Activated CD4-positive, alpha-beta T cell treated with anti-CD3 and anti-CD28 coated beads for 36 hours (primary cell): ENCODE measurements at regions of chr2 and their contacts with region 1.

Region 1: DNA sequence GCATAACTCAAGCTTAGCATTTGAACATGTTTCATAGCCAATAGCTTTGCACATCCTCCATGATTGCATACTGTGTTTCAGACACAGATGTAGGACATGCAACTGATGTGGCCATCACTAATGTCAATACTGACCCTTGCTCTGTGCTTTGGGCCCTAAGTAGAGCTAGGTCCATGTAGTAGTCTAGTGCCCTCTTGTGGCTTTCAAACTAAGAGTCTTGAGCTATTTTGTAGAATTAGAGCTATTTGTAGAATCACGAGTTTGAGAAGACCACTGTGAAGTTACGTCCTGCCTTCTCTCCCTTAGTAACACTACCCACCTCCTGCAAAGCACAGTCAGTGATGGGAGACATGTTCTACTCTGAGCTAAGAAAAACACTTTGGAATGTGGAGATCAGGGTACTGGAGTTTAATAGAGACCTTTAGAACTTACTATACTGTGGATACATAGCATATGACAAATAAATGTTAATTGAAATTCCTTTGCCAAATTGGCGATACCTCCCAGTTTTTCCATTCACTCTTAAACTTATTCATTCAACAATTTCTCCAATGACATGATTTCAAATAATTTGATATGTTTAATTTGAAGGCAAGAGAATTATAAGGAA is 306.5 kb upstream of the TNP1 start:
- DNase-seq: no peak
- ATAC-seq: no peak
- H3K4me3 Mint-ChIP-seq: no peak overlapping the region
- H3K27ac Mint-ChIP-seq: no peak overlapping the region
- H3K4me1 Mint-ChIP-seq: peaks cover 17% of the 10 kb centered on the region
- H3K27me3 Mint-ChIP-seq: peaks cover 14% of the 10 kb centered on the region

Region 2: DNA sequence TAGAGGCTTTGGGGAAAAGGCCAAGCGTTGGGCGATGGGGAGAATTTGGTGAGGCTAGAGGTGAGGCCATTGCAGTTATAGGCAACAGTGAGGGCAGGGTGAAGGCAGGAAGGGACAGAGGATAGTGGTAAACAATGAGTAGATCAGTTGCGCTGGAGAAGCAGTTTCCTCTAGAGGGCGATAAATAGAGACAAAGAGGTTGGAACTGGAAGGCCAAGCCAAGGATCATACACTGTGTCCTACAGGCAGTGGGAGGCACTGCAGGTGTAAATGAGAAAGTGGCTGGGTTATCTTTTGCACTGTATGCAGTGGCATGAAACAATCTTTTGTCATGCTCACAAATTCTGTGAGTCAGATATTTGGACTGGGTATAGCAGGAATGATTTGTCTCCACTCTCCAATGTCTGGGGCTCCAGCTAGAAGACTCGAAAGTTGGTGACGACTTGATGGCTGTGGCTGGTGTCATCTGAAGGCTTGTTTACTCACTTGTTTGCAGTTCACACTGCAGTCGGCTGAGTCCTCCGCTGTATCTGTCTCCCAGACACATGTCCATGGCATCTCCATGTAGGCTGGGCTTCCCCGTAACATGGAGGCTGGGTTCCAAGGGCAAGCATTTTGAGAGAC is 388.6 kb before region 1 on chr2:
- CTCF ChIA-PET with region 1: no interaction called
- POLR2A ChIA-PET with region 1: no interaction called
- intact Hi-C with region 1: loop called in 1 of 2 experiments (anchors 5 kb)
- DNase-seq: peak; percentile 64
- ATAC-seq: peak; percentile 97
- H3K4me3 Mint-ChIP-seq: no peak overlapping the region
- H3K27ac Mint-ChIP-seq: no peak overlapping the region
- H3K4me1 Mint-ChIP-seq: no peaks in the 10 kb centered on the region
- H3K27me3 Mint-ChIP-seq: peaks cover 6% of the 10 kb centered on the region

Region 3: DNA sequence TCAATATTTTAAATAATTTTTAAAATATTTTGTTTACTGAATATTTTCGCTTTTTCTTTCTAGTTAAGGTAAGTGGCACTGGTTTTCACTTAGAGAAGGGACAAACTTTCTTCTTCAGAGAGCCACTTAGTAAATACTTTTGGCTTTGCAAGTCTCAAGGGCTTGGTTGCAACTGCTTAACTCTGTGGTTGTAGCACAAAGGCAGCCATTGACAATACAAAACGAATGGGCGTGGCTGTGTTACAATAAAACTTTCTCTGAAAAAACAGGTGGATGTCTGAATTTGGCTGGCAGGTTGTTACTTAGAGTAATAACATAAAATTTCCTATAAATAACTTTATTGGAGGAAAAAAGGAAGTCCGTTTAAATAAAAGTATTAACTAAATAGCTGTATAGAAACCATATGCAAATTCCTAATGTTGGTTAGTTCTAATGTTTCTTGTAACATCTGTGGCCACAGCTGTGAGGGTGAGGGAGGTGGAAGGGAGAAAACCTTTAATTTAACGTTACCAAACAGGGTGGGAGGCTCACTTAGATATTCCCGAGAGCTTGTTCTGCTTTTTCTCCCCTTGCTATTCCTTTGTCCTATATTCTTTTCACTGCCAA is 244.1 kb before region 1 on chr2:
- CTCF ChIA-PET with region 1: no interaction called
- POLR2A ChIA-PET with region 1: no interaction called
- intact Hi-C with region 1: no loop called
- DNase-seq: no peak
- ATAC-seq: no peak
- H3K4me3 Mint-ChIP-seq: no peak overlapping the region
- H3K27ac Mint-ChIP-seq: no peak overlapping the region
- H3K4me1 Mint-ChIP-seq: no peaks in the 10 kb centered on the region
- H3K27me3 Mint-ChIP-seq: no peaks in the 10 kb centered on the region

Region 4: DNA sequence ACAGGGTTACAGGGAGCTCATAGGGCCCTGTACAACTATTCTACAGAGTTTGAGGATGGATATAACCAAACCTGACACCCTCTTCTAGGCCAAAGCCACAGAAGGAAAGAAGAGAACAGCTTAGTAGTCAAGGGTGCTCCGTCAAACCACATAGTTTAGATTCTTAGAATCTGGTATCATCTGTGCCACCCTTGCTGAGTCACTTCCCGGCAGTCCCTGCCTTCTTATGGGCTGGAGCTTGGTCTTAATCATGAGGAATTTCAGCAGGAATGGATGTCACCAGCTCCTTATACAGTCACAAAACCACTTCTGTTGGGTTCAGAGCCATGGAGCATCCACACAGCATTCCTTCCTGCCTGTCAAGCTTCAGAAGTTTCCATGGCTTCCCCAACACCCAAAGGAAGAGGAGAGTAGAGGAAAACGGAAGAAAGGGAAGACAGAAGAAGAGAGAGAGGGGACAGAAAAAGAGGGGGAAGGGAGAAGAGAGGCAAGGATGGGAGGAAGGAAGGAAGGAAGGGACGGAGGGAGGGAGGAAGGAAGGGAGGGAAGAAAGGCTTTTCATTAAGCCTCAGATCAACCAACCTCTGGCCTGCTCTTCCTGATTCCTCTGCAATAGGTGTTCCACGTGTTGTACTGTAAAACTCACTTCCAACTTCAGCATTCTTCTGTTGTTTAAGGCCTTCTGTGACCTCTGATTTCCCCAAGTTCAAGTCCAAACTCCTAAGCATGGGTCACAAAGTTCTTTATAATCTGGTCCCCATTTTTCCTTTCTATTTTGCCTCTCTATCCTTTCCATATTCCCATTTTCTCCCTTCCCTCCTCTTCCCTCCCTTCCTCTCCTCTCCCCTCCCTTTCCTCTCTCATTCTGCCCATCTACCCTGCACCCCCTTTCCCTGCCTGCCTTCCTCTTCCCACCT is 60.4 kb before region 1 on chr2:
- CTCF ChIA-PET with region 1: no interaction called
- POLR2A ChIA-PET with region 1: no interaction called
- intact Hi-C with region 1: no loop called
- DNase-seq: peak; percentile 39
- ATAC-seq: peak; percentile 86
- H3K4me3 Mint-ChIP-seq: no peak overlapping the region
- H3K27ac Mint-ChIP-seq: no peak overlapping the region
- H3K4me1 Mint-ChIP-seq: peaks cover 9% of the 10 kb centered on the region
- H3K27me3 Mint-ChIP-seq: peaks cover 7% of the 10 kb centered on the region

Region 5: DNA sequence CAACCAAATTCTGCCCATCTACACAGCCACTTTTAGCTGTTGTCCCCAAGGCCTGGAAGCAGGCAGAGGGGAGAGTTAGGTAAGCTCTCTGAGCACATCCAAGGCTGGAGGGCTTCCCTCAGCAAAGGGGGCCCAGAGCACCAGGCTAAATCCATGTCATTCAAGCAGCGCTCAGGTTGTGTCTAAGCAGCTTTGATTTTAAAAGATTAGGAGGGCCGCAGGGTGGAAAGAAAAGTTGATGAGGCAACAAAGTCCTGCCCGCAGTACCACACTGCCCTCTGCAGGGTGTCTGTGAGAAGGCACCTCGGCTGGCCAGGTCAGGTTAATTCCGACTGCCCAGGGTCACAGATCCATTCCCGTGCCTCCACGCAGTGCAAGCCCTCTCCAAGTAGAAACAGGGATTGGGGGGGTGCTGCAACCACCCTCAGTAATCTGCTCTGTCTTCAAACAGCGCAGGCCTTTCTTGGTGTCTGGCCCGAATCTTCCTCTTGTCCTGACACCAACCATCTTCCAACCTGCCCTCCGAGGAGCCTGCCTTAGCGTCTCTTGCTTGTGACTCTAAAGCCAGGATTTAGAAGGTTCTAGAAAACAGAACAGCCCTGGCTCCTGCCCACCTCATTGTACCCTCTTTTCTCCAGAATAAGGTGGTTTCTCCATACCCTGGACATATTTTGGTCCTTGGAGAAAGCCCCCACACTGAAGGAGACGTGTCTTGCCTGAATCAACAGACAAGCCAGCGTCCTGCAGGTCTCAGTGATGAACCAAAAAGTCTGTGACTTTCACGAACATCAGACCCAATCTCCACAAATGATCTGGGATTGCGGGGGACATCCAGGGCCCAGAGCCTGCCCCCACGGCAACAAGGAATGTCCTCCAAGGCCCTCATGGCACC is 547.3 kb after region 1 on chr2:
- CTCF ChIA-PET with region 1: no interaction called
- POLR2A ChIA-PET with region 1: no interaction called
- intact Hi-C with region 1: loop called in 1 of 2 experiments (anchors 2 kb)
- DNase-seq: peak; percentile 86
- ATAC-seq: peak; percentile 78
- H3K4me3 Mint-ChIP-seq: no peak overlapping the region
- H3K27ac Mint-ChIP-seq: no peak overlapping the region
- H3K4me1 Mint-ChIP-seq: no peaks in the 10 kb centered on the region
- H3K27me3 Mint-ChIP-seq: peaks cover 2% of the 10 kb centered on the region

Region 6: DNA sequence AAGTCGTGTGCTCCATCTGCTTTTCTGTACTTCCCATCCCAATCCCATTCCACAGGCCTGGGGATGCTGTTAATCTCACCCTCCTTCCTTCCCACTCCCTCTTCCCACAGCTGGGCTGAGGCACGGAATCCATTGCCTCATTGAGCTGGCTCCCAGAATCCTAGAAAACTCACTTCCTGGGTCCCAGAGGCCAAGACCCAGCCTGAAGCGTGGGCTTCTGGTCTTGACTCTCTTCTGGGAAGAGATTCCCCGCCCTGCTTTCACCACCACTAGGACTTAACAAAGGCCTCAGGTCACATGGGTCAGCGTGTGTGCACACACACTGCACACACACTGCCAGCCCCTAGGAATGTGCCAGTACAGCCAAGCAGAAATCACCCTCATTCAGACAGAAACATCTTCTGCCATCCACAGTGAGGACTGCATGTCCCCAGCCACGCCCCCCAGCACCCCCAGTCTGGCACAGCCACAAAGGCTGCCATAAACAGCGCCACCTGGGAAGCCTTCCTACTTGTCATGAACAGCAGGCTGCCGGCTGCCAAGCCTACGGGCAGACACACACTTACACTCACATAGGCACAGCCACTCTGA is 670.6 kb after region 1 on chr2:
- CTCF ChIA-PET with region 1: no interaction called
- POLR2A ChIA-PET with region 1: no interaction called
- intact Hi-C with region 1: no loop called
- DNase-seq: peak; percentile 19
- ATAC-seq: no peak
- H3K4me3 Mint-ChIP-seq: no peak overlapping the region
- H3K27ac Mint-ChIP-seq: no peak overlapping the region
- H3K4me1 Mint-ChIP-seq: no peaks in the 10 kb centered on the region
- H3K27me3 Mint-ChIP-seq: no peaks in the 10 kb centered on the region